Cardiac septum (tissue), 1 donor: ENCODE measurements at regions of chr15 and their contacts with region 1.

Region 1: GRCh38 chr15:76426941-76427340 is 90.4 kb downstream of the ISL2 start:
- DNase-seq: no peak

Region 2: DNA sequence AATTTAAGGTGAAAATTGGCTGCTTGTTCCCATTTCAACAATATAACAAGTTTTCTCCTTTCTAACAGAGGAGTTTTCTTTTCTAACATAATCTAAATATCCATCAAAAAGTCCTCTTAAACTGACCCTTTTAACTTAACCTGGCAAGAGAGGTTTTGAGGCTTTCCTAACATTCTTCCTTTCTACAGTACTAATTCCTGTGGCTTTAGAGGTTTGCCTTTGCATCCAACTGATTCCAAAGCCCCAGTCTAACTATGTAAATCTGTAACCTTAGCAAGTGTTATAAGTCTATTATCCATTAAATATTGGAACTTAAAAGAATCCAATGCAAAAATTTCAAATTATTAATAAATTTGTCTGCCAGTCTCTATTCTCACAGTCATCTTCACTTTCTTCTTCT is 43.8 kb after region 1 on chr15:
- intact Hi-C with region 1: loop called (anchors 10 kb)
- DNase-seq: no peak

Region 3: DNA sequence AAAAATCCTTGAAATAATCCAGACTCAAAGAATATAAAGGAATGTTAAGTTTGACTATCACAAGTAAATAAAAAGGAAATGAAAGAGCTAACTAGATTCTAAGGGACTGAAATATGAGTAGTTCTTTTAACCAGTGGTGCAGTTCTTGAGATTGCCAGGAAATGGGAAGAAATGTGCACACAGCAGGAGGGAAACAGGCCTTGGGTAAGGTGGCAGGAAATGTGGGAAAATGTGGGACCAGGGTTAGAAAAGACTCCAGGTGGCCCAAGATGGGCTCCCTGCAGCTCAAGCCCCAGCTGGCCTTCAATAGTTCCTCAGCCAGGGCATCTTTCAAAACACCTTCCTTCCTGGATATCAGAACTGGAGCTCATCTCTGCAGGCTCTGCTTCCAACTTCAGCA is 91.0 kb after region 1 on chr15:
- intact Hi-C with region 1: no loop called
- DNase-seq: no peak

Region 4: GRCh38 chr15:77753270-77753873 is 1326.4 kb after region 1 on chr15:
- intact Hi-C with region 1: no loop called
- DNase-seq: no peak